Endothelial cell of umbilical vein (primary cell): ENCODE measurements at regions of chr5 and their contacts with region 1.

Region 1: DNA sequence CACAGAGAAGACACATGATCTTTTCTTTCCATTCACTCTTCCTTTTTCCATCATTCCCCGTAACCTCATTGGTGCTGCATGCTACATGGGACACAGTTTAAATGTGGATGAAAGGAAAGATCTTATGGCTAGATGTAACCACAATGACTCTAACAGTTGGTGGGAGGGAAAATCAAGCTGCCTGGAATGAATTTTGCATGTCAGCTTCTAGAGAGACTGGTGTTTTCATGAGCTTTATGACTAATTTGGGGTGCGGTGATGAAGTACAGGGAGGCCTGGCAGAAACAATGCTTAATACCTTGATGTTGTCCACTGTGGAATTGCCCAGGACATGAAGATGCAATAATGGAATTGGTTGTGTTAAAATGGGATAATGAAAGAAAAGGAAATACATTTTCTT is 55.9 kb upstream of the MYO10 start:
- DNase-seq: peak; percentile 56
- H3K4me3 ChIP-seq: no peak overlapping the region
- H3K27ac ChIP-seq: peak overlapping the region; percentile 76
- H3K4me1 ChIP-seq: peaks cover 41% of the 10 kb centered on the region
- H3K27me3 ChIP-seq: no peaks in the 10 kb centered on the region
- CTCF ChIP-seq: no peak
- POLR2A ChIP-seq: no peak

Region 2: GRCh38 chr5:16957304-16958196 is 34.5 kb before region 1 on chr5:
- CTCF ChIA-PET with region 1: interaction called, 4 read pairs
- POLR2A ChIA-PET with region 1: no interaction called
- dilution Hi-C with region 1: no loop called
- intact Hi-C with region 1: loop called (anchors 2 kb)
- DNase-seq: peak; percentile 89
- H3K4me3 ChIP-seq: no peak overlapping the region
- H3K27ac ChIP-seq: peak overlapping the region; percentile 87
- H3K4me1 ChIP-seq: peaks cover 12% of the 10 kb centered on the region
- H3K27me3 ChIP-seq: no peaks in the 10 kb centered on the region
- CTCF ChIP-seq: no peak
- POLR2A ChIP-seq: no peak

Region 3: GRCh38 chr5:17037751-17038150 is 45.7 kb after region 1 on chr5:
- CTCF ChIA-PET with region 1: no interaction called
- POLR2A ChIA-PET with region 1: interaction called, 3 read pairs
- dilution Hi-C with region 1: no loop called
- intact Hi-C with region 1: loop called (anchors 1 kb)
- DNase-seq: peak; percentile 85
- H3K4me3 ChIP-seq: no peak overlapping the region
- H3K27ac ChIP-seq: peak overlapping the region; percentile 81
- H3K4me1 ChIP-seq: peaks cover 19% of the 10 kb centered on the region
- H3K27me3 ChIP-seq: no peaks in the 10 kb centered on the region
- CTCF ChIP-seq: no peak
- POLR2A ChIP-seq: no peak